AG04450 (cell line): ENCODE measurements at regions of chr12 and their contacts with region 1.

Region 1: GRCh38 chr12:80412369-80412953 is 31.6 kb upstream of the PTPRQ start:
- DNase-seq: peak; percentile 30
- H3K4me3 ChIP-seq: no peak overlapping the region
- H3K27ac ChIP-seq: no peak overlapping the region
- H3K27me3 ChIP-seq: no peaks in the 10 kb centered on the region
- CTCF ChIP-seq: peak; percentile 76

Region 2: GRCh38 chr12:80598004-80598606 is 185.6 kb after region 1 on chr12:
- CTCF ChIA-PET with region 1: interaction called, 16 read pairs
- POLR2A ChIA-PET with region 1: no interaction called
- DNase-seq: peak; percentile 20
- H3K4me3 ChIP-seq: no peak overlapping the region
- H3K27ac ChIP-seq: no peak overlapping the region
- H3K27me3 ChIP-seq: no peaks in the 10 kb centered on the region
- CTCF ChIP-seq: peak; percentile 54

Region 3: DNA sequence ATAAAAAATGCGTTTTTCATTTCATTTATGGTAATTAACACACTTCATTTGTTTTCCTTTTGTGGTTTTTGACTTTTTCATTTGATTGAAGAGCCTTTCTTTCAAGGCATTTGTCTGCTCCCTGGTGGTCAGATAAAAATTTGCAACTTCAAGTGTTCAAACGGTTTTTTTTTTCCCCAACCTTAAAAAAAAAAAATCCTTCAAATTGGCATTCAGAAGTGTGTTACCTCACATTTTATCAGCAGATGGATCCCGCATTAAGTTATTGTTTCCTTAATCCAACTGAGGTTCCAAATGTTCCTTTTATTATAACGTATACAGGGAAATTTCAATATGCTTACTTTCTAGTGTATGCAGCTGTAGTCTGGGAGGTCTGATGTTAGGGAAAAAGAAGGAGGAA is 351.4 kb after region 1 on chr12:
- CTCF ChIA-PET with region 1: interaction called, 29 read pairs
- POLR2A ChIA-PET with region 1: no interaction called
- DNase-seq: no peak
- H3K4me3 ChIP-seq: no peak overlapping the region
- H3K27ac ChIP-seq: no peak overlapping the region
- H3K27me3 ChIP-seq: no peaks in the 10 kb centered on the region
- CTCF ChIP-seq: peak; percentile 70